HCT116 (cell line): ENCODE measurements at regions of chr12 and their contacts with region 1.

Region 1: GRCh38 chr12:43882578-43883178 is 46.8 kb downstream of the TMEM117 start:
- DNase-seq: peak; percentile 39
- ATAC-seq: peak; percentile 83
- H3K4me3 ChIP-seq: no peak overlapping the region
- H3K27ac ChIP-seq: no peak overlapping the region
- H3K4me1 ChIP-seq: no peaks in the 10 kb centered on the region
- H3K27me3 ChIP-seq: no peaks in the 10 kb centered on the region
- CTCF ChIP-seq: peak; percentile 74 to 92 (median 82)
- POLR2A ChIP-seq: no peak
- RAD21 ChIP-seq: peak; percentile 92

Region 2: DNA sequence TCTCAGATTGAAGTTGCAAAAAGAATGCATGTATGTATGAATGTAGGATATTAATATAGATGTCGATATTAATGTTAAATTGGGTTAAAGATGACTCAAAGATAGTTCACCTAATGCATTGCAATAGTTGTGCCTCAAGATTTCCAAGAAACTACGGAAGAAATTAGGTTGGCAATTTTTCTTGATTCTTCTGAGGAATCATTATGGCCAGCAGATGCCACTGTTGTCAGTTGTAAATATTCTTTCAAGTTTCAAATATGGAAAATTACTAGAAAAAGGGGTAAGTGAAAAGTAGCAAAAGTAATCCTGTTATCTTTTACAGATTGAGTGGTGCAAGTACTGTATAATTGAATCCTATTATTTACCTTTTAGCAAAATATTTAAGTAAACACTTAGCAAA is 532.8 kb before region 1 on chr12:
- CTCF ChIA-PET with region 1: interaction called, 12 read pairs
- POLR2A ChIA-PET with region 1: no interaction called
- RAD21 ChIA-PET with region 1: no interaction called
- intact Hi-C with region 1: loop called (anchors 1 kb)
- DNase-seq: peak; percentile 10
- ATAC-seq: no peak
- H3K4me3 ChIP-seq: no peak overlapping the region
- H3K27ac ChIP-seq: no peak overlapping the region
- H3K4me1 ChIP-seq: no peaks in the 10 kb centered on the region
- H3K27me3 ChIP-seq: no peaks in the 10 kb centered on the region
- CTCF ChIP-seq: peak; percentile 32 to 59 (median 44); a peak in 5 of 6 replicates
- POLR2A ChIP-seq: no peak
- RAD21 ChIP-seq: peak; percentile 66

Region 3: DNA sequence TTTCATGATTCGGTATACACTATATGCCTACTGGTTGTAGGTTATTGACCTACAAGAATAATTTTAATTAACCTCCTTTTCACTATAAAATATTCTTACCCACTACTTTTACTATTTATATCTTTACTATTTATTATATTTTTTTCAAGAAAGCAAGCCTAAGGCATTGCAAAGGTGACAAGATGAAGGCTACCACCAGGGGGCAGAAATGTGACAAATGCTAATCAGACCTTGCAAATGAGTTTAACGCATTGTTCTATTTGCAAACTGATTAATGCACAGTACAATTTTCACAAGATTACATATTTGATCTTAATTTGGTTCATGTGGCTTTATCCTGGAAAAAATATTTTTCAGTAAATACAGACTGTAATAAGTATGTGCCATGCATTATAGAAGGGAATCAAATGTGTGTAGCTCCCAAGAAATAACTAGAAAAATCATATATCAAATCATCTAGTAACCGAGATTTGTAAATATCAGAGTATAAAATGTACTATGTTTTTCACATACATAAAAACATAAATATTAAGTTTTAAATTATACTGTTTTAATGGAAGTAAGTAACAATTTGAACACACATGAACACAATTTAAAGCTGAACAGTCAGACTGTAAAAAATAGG is 437.6 kb before region 1 on chr12:
- CTCF ChIA-PET with region 1: interaction called, 26 read pairs
- POLR2A ChIA-PET with region 1: no interaction called
- RAD21 ChIA-PET with region 1: interaction called, 3 to 5 read pairs
- intact Hi-C with region 1: loop called (anchors 1 kb)
- DNase-seq: peak; percentile 73
- ATAC-seq: peak; percentile 69
- H3K4me3 ChIP-seq: no peak overlapping the region
- H3K27ac ChIP-seq: no peak overlapping the region
- H3K4me1 ChIP-seq: no peaks in the 10 kb centered on the region
- H3K27me3 ChIP-seq: no peaks in the 10 kb centered on the region
- CTCF ChIP-seq: peak; percentile 45 to 81 (median 69); a peak in 5 of 6 replicates
- POLR2A ChIP-seq: no peak
- RAD21 ChIP-seq: peak; percentile 46

Region 4: DNA sequence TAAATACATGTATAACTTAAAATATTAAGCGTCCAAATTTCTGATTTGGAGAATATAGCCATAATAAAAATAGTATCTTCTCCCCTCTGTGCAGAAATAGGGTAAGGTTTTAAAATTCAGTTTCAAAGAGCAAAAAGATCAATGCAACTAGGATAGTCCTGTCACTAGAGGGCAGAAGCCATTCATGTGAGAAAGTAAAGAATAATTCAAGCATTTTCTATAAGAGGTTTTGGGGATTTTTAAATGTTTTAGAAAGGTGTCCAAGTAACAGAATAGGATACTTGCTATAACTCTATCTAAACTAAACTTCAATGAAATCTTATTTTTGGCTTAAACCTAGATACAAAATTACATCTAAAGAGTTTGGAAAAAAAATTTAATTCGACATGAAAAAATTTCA is 381.0 kb before region 1 on chr12:
- CTCF ChIA-PET with region 1: interaction called, 18 read pairs
- POLR2A ChIA-PET with region 1: no interaction called
- RAD21 ChIA-PET with region 1: interaction called, 3 to 7 read pairs
- intact Hi-C with region 1: loop called (anchors 2 kb)
- DNase-seq: peak; percentile 36
- ATAC-seq: no peak
- H3K4me3 ChIP-seq: no peak overlapping the region
- H3K27ac ChIP-seq: no peak overlapping the region
- H3K4me1 ChIP-seq: no peaks in the 10 kb centered on the region
- H3K27me3 ChIP-seq: no peaks in the 10 kb centered on the region
- CTCF ChIP-seq: peak; percentile 61 to 75 (median 65)
- POLR2A ChIP-seq: no peak
- RAD21 ChIP-seq: peak; percentile 72

Region 5: GRCh38 chr12:43758728-43759563 is 123.7 kb before region 1 on chr12 and contains the starts of genes IRAK4 and PUS7L:
- CTCF ChIA-PET with region 1: interaction called, 13 read pairs
- POLR2A ChIA-PET with region 1: no interaction called
- RAD21 ChIA-PET with region 1: no interaction called
- intact Hi-C with region 1: loop called (anchors 5 kb)
- DNase-seq: peak; percentile 96
- ATAC-seq: peak; percentile 93
- H3K4me3 ChIP-seq: peak within 1 kb of the TSS; percentile 76 to 77
- H3K27ac ChIP-seq: peak within 1 kb of the TSS; percentile 87
- H3K4me1 ChIP-seq: peaks cover 6 to 18% of the 10 kb centered on the region in 2 experiments; a peak in 3 of 4 replicates
- H3K27me3 ChIP-seq: no peaks in the 10 kb centered on the region
- CTCF ChIP-seq: peak; percentile 28 to 44 (median 40); a peak in 5 of 6 replicates
- POLR2A ChIP-seq: peak; percentile 12
- RAD21 ChIP-seq: no peak
- total RNA-seq, gene IRAK4: 6.9 TPM
- total RNA-seq, gene PUS7L: 15.3 TPM

Region 6: DNA sequence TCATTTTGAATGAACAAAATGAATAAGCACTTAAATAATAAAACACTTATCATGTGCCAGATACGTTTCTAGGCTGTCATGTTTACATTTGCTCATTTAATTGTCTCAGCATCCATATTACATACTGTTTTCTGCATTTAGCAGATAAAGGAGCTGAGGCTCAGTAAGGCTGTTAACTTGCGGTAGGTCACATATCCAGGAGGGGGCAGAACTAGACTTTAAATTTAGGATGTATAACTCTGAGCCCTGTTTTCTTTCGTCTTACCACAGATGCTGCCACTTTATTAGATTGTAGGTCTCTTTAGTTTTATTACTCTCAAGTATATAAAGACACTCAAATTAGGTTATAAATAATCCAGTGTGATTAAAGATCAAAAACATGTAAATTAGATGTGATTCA is 106.2 kb before region 1 on chr12:
- CTCF ChIA-PET with region 1: interaction called, 64 read pairs
- POLR2A ChIA-PET with region 1: interaction called, 8 read pairs
- RAD21 ChIA-PET with region 1: interaction called, 8 to 9 read pairs
- intact Hi-C with region 1: loop called (anchors 1 kb)
- DNase-seq: peak; percentile 16
- ATAC-seq: peak; percentile 83
- H3K4me3 ChIP-seq: no peak overlapping the region
- H3K27ac ChIP-seq: no peak overlapping the region
- H3K4me1 ChIP-seq: no peaks in the 10 kb centered on the region
- H3K27me3 ChIP-seq: no peaks in the 10 kb centered on the region
- CTCF ChIP-seq: peak; percentile 46 to 70 (median 65); a peak in 5 of 6 replicates
- POLR2A ChIP-seq: no peak
- RAD21 ChIP-seq: peak; percentile 70

Region 7: GRCh38 chr12:44253338-44253856 is 370.7 kb after region 1 on chr12:
- CTCF ChIA-PET with region 1: no interaction called
- POLR2A ChIA-PET with region 1: no interaction called
- RAD21 ChIA-PET with region 1: no interaction called
- intact Hi-C with region 1: no loop called
- DNase-seq: no peak
- ATAC-seq: no peak
- H3K4me3 ChIP-seq: no peak overlapping the region
- H3K27ac ChIP-seq: no peak overlapping the region
- H3K4me1 ChIP-seq: no peaks in the 10 kb centered on the region
- H3K27me3 ChIP-seq: no peaks in the 10 kb centered on the region
- CTCF ChIP-seq: no peak
- POLR2A ChIP-seq: no peak
- RAD21 ChIP-seq: no peak